HEK293 (cell line): ENCODE measurements at regions of chr17 and their contacts with region 1.

Region 1: GRCh38 chr17:38824899-38825761 is at the start of gene CWC25:
- H3K4me3 ChIP-seq: peak within 1 kb of the TSS; percentile 80
- H3K27ac ChIP-seq: peak within 1 kb of the TSS; percentile 94
- H3K4me1 ChIP-seq: no peaks in the 10 kb centered on the region
- CTCF ChIP-seq: no peak

Region 2: GRCh38 chr17:38809828-38810227 is 15.3 kb before region 1 on chr17:
- CTCF ChIA-PET with region 1: interaction called, 10 read pairs
- POLR2A ChIA-PET with region 1: no interaction called
- H3K4me3 ChIP-seq: no peak overlapping the region
- H3K27ac ChIP-seq: no peak overlapping the region
- H3K4me1 ChIP-seq: no peaks in the 10 kb centered on the region
- CTCF ChIP-seq: no peak

Region 3: GRCh38 chr17:38841141-38841485 is 16.0 kb after region 1 on chr17:
- CTCF ChIA-PET with region 1: interaction called, 3 read pairs
- POLR2A ChIA-PET with region 1: interaction called, 12 read pairs
- H3K4me3 ChIP-seq: no peak overlapping the region
- H3K27ac ChIP-seq: no peak overlapping the region
- H3K4me1 ChIP-seq: no peaks in the 10 kb centered on the region
- CTCF ChIP-seq: no peak

Region 4: DNA sequence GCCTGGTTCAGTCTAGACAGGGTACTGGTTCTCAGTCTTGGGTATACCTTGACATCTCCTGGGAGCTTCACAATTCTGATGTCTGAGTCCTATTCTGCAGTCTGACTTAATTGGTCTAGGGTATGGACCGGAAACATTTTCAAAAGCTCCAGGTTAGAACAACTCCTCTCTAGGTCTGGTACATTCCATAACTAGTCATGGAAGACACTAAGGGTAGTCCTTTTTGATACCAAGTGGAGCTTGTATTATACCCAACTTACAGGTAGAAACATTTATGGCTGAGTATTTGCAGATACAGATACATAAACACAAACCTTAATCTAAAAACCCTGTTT is 23.4 kb after region 1 on chr17:
- CTCF ChIA-PET with region 1: no interaction called
- POLR2A ChIA-PET with region 1: interaction called, 12 read pairs
- H3K4me3 ChIP-seq: no peak overlapping the region
- H3K27ac ChIP-seq: no peak overlapping the region
- H3K4me1 ChIP-seq: peaks cover 3% of the 10 kb centered on the region
- CTCF ChIP-seq: no peak

Region 5: GRCh38 chr17:38853292-38854219 is 28.4 kb after region 1 on chr17 and contains the start of gene RPL23:
- CTCF ChIA-PET with region 1: no interaction called
- POLR2A ChIA-PET with region 1: interaction called, 12 read pairs
- H3K4me3 ChIP-seq: peak within 1 kb of the TSS; percentile 86
- H3K27ac ChIP-seq: peak within 1 kb of the TSS; percentile 99
- H3K4me1 ChIP-seq: peaks cover 3% of the 10 kb centered on the region
- CTCF ChIP-seq: no peak